GM12878 (cell line): ENCODE measurements at regions of chrX and their contacts with region 1.

Region 1: DNA sequence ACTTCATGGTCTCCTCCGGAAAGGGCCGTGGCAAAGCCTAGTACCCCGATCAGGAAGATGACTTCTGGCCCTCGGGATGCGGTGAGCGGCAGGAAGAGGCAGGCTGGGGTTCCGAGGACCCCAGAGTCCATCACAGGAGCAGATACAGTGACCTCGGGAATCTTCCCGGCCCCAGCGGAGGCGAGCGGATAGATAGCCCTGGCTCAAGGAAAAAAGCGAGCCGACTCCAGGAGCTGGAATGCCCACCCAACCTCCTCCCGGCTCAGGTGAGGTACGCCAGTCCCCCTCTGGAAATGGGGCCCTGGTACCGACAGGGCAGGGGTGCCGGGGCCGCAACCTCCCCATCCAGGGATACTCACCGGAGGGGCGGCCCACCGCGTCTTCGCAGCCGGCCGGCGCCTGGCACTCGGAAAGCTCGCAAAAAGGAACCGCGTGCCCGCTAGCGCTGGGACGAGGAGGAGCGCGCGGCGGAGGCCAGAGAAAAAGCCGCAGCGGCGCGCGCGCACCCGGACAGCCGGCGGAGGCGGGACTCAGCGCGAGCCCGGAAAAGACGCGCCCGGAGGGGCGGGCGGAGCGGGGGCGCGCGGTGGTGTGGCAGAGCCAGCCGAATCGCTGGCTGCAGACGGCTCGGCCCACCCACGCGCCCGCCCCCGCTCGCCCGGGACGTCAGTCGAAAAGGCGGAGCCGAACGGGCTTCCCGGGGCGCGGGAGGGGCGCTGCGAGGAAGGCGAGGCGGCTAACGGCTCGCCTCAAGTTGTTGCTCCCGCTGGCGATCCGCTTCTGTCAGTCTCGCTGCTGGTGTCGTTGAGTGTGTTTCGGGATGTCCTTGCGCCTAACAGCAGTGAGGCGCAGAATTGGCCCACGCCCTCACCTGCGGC is at the start of gene ACSL4:
- DNase-seq: no peak
- ATAC-seq: peak; percentile 91
- H3K4me3 ChIP-seq: peak within 1 kb of the TSS; percentile 69
- H3K27ac ChIP-seq: peak within 1 kb of the TSS; percentile 88
- H3K4me1 ChIP-seq: no peaks in the 10 kb centered on the region
- H3K27me3 ChIP-seq: no peaks in the 10 kb centered on the region
- CTCF ChIP-seq: no peak
- EP300 ChIP-seq: no peak
- POLR2A ChIP-seq: peak; percentile 84
- RAD21 ChIP-seq: no peak
- polyA plus RNA-seq, gene ACSL4: 20.7 to 23.6 TPM

Region 2: GRCh38 chrX:109840585-109840984 is 107.6 kb after region 1 on chrX:
- CTCF ChIA-PET with region 1: no interaction called
- POLR2A ChIA-PET with region 1: interaction called, 6 read pairs
- RAD21 ChIA-PET with region 1: interaction called, 5 read pairs
- SMC1A ChIA-PET with region 1: interaction called, 11 read pairs
- in situ Hi-C with region 1: no loop called
- intact Hi-C with region 1: no loop called
- DNase-seq: no peak
- ATAC-seq: peak; percentile 36
- H3K4me3 ChIP-seq: no peak overlapping the region
- H3K27ac ChIP-seq: no peak overlapping the region
- H3K4me1 ChIP-seq: peaks cover 6% of the 10 kb centered on the region; the same call in 1 of the 2 replicates
- H3K27me3 ChIP-seq: no peaks in the 10 kb centered on the region
- CTCF ChIP-seq: no peak
- EP300 ChIP-seq: no peak
- POLR2A ChIP-seq: no peak
- RAD21 ChIP-seq: no peak